Activated CD4-positive, alpha-beta memory T cell treated with anti-CD3 and anti-CD28 coated beads for 36 hours (primary cell): ENCODE measurements at regions of chr4 and their contacts with region 1.

Region 1: DNA sequence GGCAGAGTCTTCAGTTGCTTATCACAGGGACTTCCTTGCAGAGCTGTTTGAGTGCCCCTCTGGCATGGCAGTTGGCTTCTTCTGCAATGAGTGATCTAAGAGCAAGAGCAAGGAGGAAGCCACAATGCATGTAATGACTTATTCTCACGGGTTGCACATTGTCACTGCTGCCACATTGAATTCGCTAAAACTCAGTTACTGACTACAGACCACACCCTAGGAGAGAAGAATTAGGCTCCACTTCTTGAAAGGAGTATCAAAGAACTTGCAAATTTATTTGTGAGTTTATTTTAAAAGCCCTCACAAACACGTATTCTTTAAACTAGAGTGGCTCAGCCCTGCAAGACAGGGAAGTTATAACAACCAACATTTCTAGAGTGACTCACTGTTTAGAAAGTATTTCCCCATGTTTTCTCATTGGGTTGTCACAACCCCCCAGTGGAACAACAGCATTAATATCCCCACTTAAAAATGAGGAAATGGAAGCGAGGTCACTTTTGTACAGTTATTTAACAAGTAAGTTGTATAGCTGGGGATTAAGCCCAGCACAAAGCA is 32.4 kb upstream of the RBPJ start:
- DNase-seq: peak; percentile 74
- H3K4me3 Mint-ChIP-seq: no peak overlapping the region
- H3K27ac Mint-ChIP-seq: peak overlapping the region; percentile 66
- H3K4me1 Mint-ChIP-seq: peaks cover 25% of the 10 kb centered on the region
- H3K27me3 Mint-ChIP-seq: no peaks in the 10 kb centered on the region

Region 2: GRCh38 chr4:26183017-26183416 is 105.4 kb before region 1 on chr4:
- CTCF ChIA-PET with region 1: no interaction called
- POLR2A ChIA-PET with region 1: no interaction called
- intact Hi-C with region 1: no loop called
- DNase-seq: no peak
- H3K4me3 Mint-ChIP-seq: no peak overlapping the region
- H3K27ac Mint-ChIP-seq: no peak overlapping the region
- H3K4me1 Mint-ChIP-seq: peaks cover 20% of the 10 kb centered on the region
- H3K27me3 Mint-ChIP-seq: no peaks in the 10 kb centered on the region

Region 3: GRCh38 chr4:26233350-26233749 is 55.1 kb before region 1 on chr4:
- CTCF ChIA-PET with region 1: no interaction called
- POLR2A ChIA-PET with region 1: interaction called, 4 read pairs
- intact Hi-C with region 1: loop called (anchors 5 kb)
- DNase-seq: no peak
- H3K4me3 Mint-ChIP-seq: peak overlapping the region; percentile 33
- H3K27ac Mint-ChIP-seq: peak overlapping the region; percentile 28
- H3K4me1 Mint-ChIP-seq: peaks cover 22% of the 10 kb centered on the region
- H3K27me3 Mint-ChIP-seq: no peaks in the 10 kb centered on the region

Region 4: GRCh38 chr4:26311633-26312032 is 23.2 kb after region 1 on chr4:
- CTCF ChIA-PET with region 1: no interaction called
- POLR2A ChIA-PET with region 1: no interaction called
- intact Hi-C with region 1: loop called (anchors 1 kb)
- DNase-seq: no peak
- H3K4me3 Mint-ChIP-seq: no peak overlapping the region
- H3K27ac Mint-ChIP-seq: peak overlapping the region; percentile 54
- H3K4me1 Mint-ChIP-seq: peaks cover 26% of the 10 kb centered on the region
- H3K27me3 Mint-ChIP-seq: no peaks in the 10 kb centered on the region